Activated CD4-positive, alpha-beta memory T cell treated with anti-CD3 and anti-CD28 coated beads, Interleukin-2, amount 10 ng/mL, durations not matched to agents 7 days and 5 days (primary cell): ENCODE measurements at regions of chr2 and their contacts with region 1.

Region 1: DNA sequence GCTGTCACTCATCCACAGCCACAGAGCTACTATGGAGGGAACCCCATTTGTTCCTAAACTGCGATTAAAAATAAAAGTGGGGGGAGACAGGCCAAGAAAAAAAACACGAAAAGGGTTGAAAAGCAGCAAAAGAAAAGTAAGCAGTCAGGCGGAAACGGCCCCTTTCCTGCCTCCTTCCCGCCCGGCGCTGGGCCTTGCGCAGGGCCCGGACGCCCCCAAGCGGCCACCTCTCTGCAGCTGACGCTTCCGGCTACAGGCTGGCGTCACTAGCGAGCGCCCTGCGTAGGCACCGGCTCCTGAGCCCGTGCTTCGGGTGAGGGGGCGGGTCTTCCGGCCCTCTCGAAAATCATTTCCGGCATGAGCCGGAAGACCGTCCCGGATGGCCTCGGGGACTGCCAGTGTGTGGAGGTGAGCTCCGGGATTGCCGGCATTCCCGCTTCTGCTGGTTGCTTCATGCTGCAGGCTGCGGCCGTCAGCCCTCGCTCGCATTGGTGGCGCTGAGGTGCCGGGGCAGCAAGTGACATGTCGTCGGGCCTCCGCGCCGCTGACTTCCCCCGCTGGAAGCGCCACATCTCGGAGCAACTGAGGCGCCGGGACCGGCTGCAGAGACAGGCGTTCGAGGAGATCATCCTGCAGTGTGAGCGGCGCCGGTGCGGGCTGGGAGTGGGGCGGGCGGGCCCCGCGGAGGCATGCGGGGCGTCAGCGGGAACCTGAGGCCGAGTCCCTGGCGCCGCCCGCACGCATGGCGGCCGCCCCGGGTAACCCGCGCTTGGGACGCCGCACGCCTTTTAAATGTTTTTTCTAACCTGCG is at the start of gene ATG16L1:
- DNase-seq: peak; percentile 97
- H3K4me3 Mint-ChIP-seq: peak within 1 kb of the TSS; percentile 87
- H3K27ac Mint-ChIP-seq: peak within 1 kb of the TSS; percentile 95
- H3K4me1 Mint-ChIP-seq: peaks cover 73% of the 10 kb centered on the region
- H3K27me3 Mint-ChIP-seq: no peaks in the 10 kb centered on the region
- total RNA-seq, gene ATG16L1: 55.9 to 58.9 TPM

Region 2: GRCh38 chr2:232809349-232810124 is 442.0 kb before region 1 on chr2:
- CTCF ChIA-PET with region 1: interaction called, 10 read pairs
- POLR2A ChIA-PET with region 1: no interaction called
- DNase-seq: no peak
- H3K4me3 Mint-ChIP-seq: no peak overlapping the region
- H3K27ac Mint-ChIP-seq: no peak overlapping the region
- H3K4me1 Mint-ChIP-seq: peaks cover 3% of the 10 kb centered on the region
- H3K27me3 Mint-ChIP-seq: no peaks in the 10 kb centered on the region

Region 3: DNA sequence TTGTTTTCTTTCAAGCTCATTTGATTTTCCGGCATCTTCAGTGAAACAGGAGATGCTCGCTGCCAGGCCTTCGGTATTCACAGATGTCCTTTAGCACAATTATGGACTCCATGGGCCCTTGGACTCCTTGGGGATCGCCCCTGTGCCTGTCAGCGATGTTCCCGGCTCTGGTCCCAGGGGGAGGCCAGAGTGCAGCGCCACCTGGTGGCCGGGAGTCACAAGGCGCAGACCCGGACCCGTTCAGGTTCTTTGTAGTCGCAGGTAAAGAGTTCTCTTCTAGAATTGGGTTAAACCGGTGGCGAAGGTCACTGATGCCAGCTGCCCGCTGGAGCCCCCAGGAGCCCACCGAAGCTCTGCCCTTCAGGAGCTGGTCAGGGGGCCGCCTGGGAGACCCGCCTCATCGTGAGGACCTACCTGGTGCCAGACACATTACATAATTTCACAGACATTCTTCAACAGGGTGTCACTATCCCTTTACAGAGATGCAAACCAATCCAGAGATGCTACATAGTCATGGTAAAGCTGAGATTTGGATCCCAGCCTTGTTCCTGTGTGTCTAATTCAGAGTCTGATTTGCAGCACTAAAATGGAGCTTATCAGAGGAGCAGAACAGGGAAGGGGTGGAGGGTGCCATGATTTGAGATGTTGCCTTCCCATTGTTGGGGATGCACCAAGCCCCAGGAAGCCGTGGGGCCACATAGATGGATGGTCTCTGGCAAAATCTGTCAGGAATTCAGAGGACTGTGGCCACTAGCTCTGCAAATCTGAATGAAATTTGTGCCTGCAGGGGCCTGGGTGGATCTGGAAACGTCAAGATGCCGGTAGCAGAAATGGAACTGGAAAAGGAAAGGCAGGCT is 197.4 kb before region 1 on chr2:
- CTCF ChIA-PET with region 1: interaction called, 25 read pairs
- POLR2A ChIA-PET with region 1: interaction called, 8 read pairs
- DNase-seq: peak; percentile 74
- H3K4me3 Mint-ChIP-seq: no peak overlapping the region
- H3K27ac Mint-ChIP-seq: no peak overlapping the region
- H3K4me1 Mint-ChIP-seq: peaks cover 17% of the 10 kb centered on the region
- H3K27me3 Mint-ChIP-seq: peaks cover 25% of the 10 kb centered on the region

Region 4: GRCh38 chr2:233084488-233084887 is 167.0 kb before region 1 on chr2:
- CTCF ChIA-PET with region 1: interaction called, 4 read pairs
- POLR2A ChIA-PET with region 1: interaction called, 35 read pairs
- DNase-seq: peak; percentile 81
- H3K4me3 Mint-ChIP-seq: peak overlapping the region; percentile 73
- H3K27ac Mint-ChIP-seq: peak overlapping the region; percentile 97
- H3K4me1 Mint-ChIP-seq: peaks cover 87% of the 10 kb centered on the region
- H3K27me3 Mint-ChIP-seq: no peaks in the 10 kb centered on the region

Region 5: GRCh38 chr2:233234264-233234663 is 17.2 kb before region 1 on chr2:
- CTCF ChIA-PET with region 1: interaction called, 86 read pairs
- POLR2A ChIA-PET with region 1: interaction called, 56 read pairs
- DNase-seq: peak; percentile 52
- H3K4me3 Mint-ChIP-seq: peak overlapping the region; percentile 22
- H3K27ac Mint-ChIP-seq: peak overlapping the region; percentile 91
- H3K4me1 Mint-ChIP-seq: peaks cover 84% of the 10 kb centered on the region
- H3K27me3 Mint-ChIP-seq: no peaks in the 10 kb centered on the region

Region 6: GRCh38 chr2:233413559-233414272 is 162.2 kb after region 1 on chr2:
- CTCF ChIA-PET with region 1: no interaction called
- POLR2A ChIA-PET with region 1: no interaction called
- DNase-seq: no peak
- H3K4me3 Mint-ChIP-seq: no peak overlapping the region
- H3K27ac Mint-ChIP-seq: no peak overlapping the region
- H3K4me1 Mint-ChIP-seq: peaks cover 88% of the 10 kb centered on the region
- H3K27me3 Mint-ChIP-seq: no peaks in the 10 kb centered on the region